ENCODE measurements at regions of chr17 and their contacts with region 1.

Region 1: GRCh38 chr17:74864866-74865395 is 5.2 kb upstream of the GRIN2C start:
- DNase-seq: peak; percentile 83
- ATAC-seq: peak; percentile 65
- H3K4me3 Mint-ChIP-seq: no peak overlapping the region
- H3K27ac Mint-ChIP-seq: peak overlapping the region; percentile 39
- H3K4me1 Mint-ChIP-seq: peaks cover 11% of the 10 kb centered on the region
- H3K27me3 Mint-ChIP-seq: peaks cover 12% of the 10 kb centered on the region

Region 2: DNA sequence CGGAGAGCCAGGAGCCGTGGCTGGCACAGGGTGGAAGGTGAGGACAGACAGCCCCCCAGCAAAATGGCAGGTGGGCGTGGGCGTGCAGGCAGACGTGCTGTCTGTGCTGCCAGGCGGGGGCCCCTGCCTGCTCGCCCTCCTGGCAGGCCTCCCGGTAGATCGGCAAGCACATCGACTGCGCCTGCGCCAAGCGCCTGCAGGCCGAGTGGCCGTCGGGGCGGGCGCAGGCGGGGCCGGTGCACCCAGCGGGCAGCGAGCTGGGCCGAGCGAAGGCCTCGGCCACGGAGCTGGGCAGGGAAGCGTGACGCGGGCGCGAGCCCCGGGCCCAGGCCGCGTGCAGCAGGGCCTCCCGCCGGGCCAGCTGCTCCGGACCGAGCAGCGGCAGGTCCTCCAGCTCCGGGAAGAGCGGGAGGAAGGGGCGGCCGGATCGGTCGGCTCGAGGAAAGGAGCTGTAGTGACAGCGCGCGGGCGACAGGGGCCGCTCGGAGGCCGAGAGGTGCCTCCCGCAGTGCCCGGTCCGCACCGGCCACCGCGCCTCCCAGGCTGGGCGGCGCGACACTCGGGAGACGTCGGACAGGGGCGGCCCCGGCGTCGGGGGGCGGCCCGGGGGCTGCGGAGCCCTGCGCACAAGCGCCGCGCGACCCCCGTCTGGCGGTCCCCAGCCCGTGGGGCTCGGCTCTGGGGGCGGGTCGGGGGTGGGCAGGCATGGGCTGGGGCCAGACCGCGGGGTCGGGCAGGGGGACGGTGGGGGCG is 22.2 kb before region 1 on chr17:
- CTCF ChIA-PET with region 1: interaction called, 10 read pairs
- POLR2A ChIA-PET with region 1: no interaction called
- intact Hi-C with region 1: loop called in 1 of 2 experiments (anchors 2 kb)
- DNase-seq: peak; percentile 53
- ATAC-seq: peak; percentile 69
- H3K4me3 Mint-ChIP-seq: no peak overlapping the region
- H3K27ac Mint-ChIP-seq: no peak overlapping the region
- H3K4me1 Mint-ChIP-seq: peaks cover 6% of the 10 kb centered on the region
- H3K27me3 Mint-ChIP-seq: peaks cover 11% of the 10 kb centered on the region